Left ventricle myocardium inferior (tissue), 1 donor: ENCODE measurements at regions of chrX and their contacts with region 1.

Region 1: DNA sequence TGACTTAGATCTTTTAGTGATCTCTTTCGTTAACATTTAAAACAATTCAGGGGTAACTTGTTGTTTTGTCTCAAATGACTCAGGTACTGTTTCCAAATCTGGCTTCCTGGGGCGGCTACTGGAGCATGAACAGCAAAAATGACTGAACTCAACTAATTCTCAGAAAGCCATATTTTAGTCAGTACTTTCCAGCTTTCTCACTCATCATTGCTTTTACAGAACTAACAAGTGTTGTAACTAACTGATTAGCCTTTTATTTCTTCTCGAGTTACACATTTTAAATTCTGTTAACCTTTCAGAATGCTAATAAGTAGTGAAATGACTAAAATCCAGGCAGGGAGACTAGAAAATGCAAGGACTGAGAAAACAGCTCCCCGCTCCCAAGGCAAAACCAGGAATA is 55.3 kb downstream of the JADE3 start:
- DNase-seq: no peak
- H3K4me3 ChIP-seq: no peak overlapping the region
- H3K27ac ChIP-seq: no peak overlapping the region
- H3K4me1 ChIP-seq: peaks cover 5% of the 10 kb centered on the region
- H3K27me3 ChIP-seq: no peaks in the 10 kb centered on the region
- CTCF ChIP-seq: no peak

Region 2: DNA sequence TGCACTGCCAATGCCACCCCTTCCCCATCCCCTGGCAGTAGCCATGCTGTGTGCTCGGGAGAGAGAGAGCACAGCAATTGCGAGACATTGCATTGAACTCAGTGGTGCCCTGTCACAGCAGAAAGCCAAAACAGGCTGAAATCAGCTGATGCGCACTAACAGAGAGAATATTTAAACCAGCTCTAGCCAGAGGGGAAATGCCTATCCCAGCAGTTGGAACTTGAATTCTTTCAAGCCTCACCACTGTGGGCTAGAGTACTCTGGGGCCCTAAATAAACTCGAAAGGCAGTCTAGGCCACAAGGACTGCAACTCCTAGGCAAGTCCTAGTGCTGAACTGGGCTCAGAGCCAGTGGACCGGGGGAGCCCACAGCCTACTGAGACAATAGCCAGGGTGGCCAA is 148.4 kb before region 1 on chrX:
- intact Hi-C with region 1: no loop called
- DNase-seq: no peak
- H3K4me3 ChIP-seq: no peak overlapping the region
- H3K27ac ChIP-seq: no peak overlapping the region
- H3K4me1 ChIP-seq: no peaks in the 10 kb centered on the region
- H3K27me3 ChIP-seq: no peaks in the 10 kb centered on the region
- CTCF ChIP-seq: no peak

Region 3: GRCh38 chrX:46836701-46837557 is 130.6 kb before region 1 on chrX and contains the start of gene RP2:
- intact Hi-C with region 1: loop called (anchors 5 kb)
- DNase-seq: peak; percentile 90
- H3K4me3 ChIP-seq: peak within 1 kb of the TSS; percentile 85
- H3K27ac ChIP-seq: peak within 1 kb of the TSS; percentile 90
- H3K4me1 ChIP-seq: peaks cover 31% of the 10 kb centered on the region
- H3K27me3 ChIP-seq: no peaks in the 10 kb centered on the region
- CTCF ChIP-seq: peak; percentile 46
- total RNA-seq, gene RP2: 3.3 TPM

Region 4: GRCh38 chrX:46912098-46912602 is 55.4 kb before region 1 on chrX and contains the start of gene JADE3:
- intact Hi-C with region 1: loop called (anchors 10 kb)
- DNase-seq: peak; percentile 80
- H3K4me3 ChIP-seq: peak within 1 kb of the TSS; percentile 80
- H3K27ac ChIP-seq: peak within 1 kb of the TSS; percentile 88
- H3K4me1 ChIP-seq: peaks cover 25% of the 10 kb centered on the region
- H3K27me3 ChIP-seq: no peaks in the 10 kb centered on the region
- CTCF ChIP-seq: no peak
- total RNA-seq, gene JADE3: 6.3 TPM